Activated B cell treated with CpG ODN at 0.5 μM for 24 hours (primary cell): ENCODE measurements at regions of chr12 and their contacts with region 1.

Region 1: DNA sequence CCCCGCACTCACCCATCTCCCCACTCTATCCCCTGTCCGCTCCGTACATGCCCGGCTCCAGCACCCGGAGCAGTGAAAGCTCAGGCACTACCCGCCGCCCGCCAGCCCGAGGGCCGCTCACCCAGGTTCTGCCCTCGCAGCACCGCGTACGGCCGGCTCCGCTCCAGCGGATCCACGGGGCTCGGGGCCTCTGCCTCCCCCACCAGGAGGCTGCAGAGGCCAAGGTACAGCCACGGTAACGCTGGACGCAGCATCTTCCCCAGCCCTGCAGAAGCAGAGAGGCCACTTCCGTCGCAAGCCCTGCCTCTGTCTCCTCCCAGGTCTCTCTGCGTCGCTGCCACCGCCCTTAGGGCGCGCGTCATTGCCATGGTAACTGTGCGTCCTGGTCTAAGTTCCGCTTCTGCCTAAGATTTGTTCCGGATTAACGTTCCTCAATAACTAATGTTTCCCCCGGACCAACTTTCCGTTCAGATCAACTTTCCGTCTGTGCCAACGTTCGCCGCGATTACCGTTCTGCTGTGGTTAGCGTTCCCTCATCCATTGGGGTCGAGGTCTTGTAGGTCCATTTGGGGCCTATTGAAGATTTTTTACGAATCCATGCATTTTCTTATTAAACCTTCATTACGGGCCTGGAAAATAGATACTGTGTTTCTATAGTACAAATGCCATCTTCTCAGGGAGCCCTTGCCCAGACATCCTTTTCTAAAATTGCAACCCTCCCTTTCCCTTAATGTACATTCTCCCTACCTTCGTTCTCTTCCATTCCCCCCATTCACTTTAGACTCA is at the start of gene C12orf76:
- DNase-seq: peak; percentile 80
- ATAC-seq: peak; percentile 96
- H3K4me3 Mint-ChIP-seq: peak within 1 kb of the TSS; percentile 95
- H3K27ac Mint-ChIP-seq: peak within 1 kb of the TSS; percentile 100
- H3K4me1 Mint-ChIP-seq: peaks cover 52% of the 10 kb centered on the region
- H3K27me3 Mint-ChIP-seq: no peaks in the 10 kb centered on the region
- CTCF ChIP-seq: no peak
- total RNA-seq, gene C12orf76: 20.5 and 24.8 TPM in 2 replicates

Region 2: DNA sequence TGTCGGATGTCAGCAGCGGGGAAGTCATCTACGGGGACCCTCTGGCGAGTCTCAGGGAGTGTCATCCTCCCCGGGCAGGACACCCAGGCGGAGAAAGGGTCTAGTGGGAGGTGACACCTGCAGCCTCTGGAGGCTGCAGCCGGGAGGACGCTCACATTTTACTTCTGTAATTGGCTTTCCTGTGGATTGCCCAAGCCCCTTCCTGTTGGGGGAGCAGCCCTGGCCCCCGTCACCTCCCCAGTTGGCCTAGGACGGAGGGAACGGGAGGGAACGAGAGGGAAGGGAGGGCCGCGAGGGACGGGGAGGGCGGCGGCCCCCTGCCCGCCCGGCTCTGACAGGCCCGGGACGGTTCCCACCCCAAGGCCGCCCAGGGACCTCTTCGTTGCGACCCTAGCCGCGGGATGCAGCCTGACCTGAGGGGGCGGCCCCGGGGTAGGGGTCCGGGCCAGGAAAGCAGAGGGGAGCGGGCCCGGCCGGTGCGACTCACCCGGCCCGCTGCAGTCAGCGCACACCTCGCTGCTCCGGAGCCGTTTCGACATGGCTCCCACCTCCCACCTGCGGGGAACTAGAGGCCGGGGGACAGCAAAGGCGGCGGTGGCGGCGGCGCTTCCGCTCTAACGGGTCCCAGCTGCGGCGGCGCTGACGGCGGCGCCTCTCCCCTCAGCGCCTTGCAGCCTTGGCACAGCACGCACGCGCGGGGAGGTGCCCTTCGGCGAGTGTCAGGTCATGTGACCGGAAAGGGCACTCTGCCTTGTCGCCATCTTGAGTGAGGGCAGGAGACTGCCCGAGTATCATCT is 52.6 kb before region 1 on chr12 and contains the start of gene GIT2:
- CTCF ChIA-PET with region 1: no interaction called
- POLR2A ChIA-PET with region 1: interaction called, 4 read pairs
- intact Hi-C with region 1: loop called (anchors 1 kb)
- DNase-seq: peak; percentile 86
- ATAC-seq: peak; percentile 72
- H3K4me3 Mint-ChIP-seq: peak within 1 kb of the TSS; percentile 96
- H3K27ac Mint-ChIP-seq: peak within 1 kb of the TSS; percentile 95
- H3K4me1 Mint-ChIP-seq: peaks cover 80% of the 10 kb centered on the region
- H3K27me3 Mint-ChIP-seq: no peaks in the 10 kb centered on the region
- CTCF ChIP-seq: no peak
- total RNA-seq, gene GIT2: 89.2 and 107 TPM in 2 replicates

Region 3: GRCh38 chr12:110079477-110080400 is 31.3 kb after region 1 on chr12:
- CTCF ChIA-PET with region 1: interaction called, 3 read pairs
- POLR2A ChIA-PET with region 1: interaction called, 4 read pairs
- intact Hi-C with region 1: loop called (anchors 1 kb)
- DNase-seq: peak; percentile 50
- ATAC-seq: peak; percentile 91
- H3K4me3 Mint-ChIP-seq: peak overlapping the region; percentile 82
- H3K27ac Mint-ChIP-seq: peak overlapping the region; percentile 99
- H3K4me1 Mint-ChIP-seq: peaks cover 24% of the 10 kb centered on the region
- H3K27me3 Mint-ChIP-seq: no peaks in the 10 kb centered on the region
- CTCF ChIP-seq: no peak

Region 4: GRCh38 chr12:110245369-110245772 is 196.9 kb after region 1 on chr12:
- CTCF ChIA-PET with region 1: no interaction called
- POLR2A ChIA-PET with region 1: no interaction called
- intact Hi-C with region 1: loop called (anchors 1 kb)
- DNase-seq: peak; percentile 36
- ATAC-seq: peak; percentile 90
- H3K4me3 Mint-ChIP-seq: no peak overlapping the region
- H3K27ac Mint-ChIP-seq: no peak overlapping the region
- H3K4me1 Mint-ChIP-seq: peaks cover 8% of the 10 kb centered on the region
- H3K27me3 Mint-ChIP-seq: peaks cover 2% of the 10 kb centered on the region
- CTCF ChIP-seq: no peak

Region 5: DNA sequence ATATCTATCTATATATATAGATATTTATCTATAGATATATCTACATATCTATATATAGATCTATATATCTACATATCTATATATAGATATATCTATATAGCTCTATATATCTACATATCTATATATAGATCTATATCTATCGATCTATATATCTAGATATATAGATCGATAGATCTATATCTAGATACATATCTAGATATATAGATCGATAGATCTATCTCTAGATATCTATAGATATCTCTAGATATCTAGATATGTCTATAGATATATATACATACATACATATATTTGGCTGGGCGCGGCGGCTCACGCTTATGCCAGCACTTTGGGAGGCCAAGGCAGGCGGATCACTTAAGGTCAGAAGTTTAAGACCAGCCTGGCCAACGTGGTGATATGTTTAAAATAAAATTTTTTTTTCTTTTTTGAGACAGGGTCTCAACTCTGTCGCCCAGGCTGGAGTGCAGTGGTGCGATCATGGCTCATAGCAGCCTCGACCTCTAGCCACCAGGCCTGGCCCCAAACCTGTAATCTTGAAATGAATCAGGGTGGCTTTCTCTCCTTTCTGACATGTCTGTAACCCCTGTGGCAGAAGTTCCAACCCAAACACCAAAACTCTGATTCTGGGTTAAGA is 383.6 kb after region 1 on chr12:
- CTCF ChIA-PET with region 1: no interaction called
- POLR2A ChIA-PET with region 1: interaction called, 3 read pairs
- intact Hi-C with region 1: loop called (anchors 1 kb)
- DNase-seq: no peak
- ATAC-seq: no peak
- H3K4me3 Mint-ChIP-seq: no peak overlapping the region
- H3K27ac Mint-ChIP-seq: no peak overlapping the region
- H3K4me1 Mint-ChIP-seq: peaks cover 2% of the 10 kb centered on the region
- H3K27me3 Mint-ChIP-seq: no peaks in the 10 kb centered on the region
- CTCF ChIP-seq: no peak